ENCODE measurements at regions of chr21 and their contacts with region 1.

Region 1: DNA sequence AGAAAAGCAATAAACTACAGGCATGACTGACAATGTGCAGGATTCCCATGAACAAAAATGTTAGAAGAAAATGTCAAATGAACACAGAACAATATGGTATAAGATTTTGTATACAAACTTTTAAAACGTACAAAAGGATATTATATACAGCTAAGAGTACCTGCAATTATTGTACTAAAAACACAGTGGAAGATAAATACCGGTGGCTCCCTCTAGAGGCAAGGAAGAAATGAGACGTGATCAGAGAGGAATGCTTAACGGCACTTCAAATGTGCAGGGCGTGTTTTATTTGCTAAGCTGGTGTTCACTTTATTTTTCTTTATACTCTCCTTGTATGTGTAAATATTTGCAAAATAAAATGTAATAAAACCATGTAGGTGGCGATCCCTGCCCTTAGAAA is 191.8 kb upstream of the SAMSN1 start:
- DNase-seq: peak; percentile 53
- ATAC-seq: peak; percentile 68
- H3K4me3 Mint-ChIP-seq: no peak overlapping the region
- H3K27ac Mint-ChIP-seq: no peak overlapping the region
- H3K4me1 Mint-ChIP-seq: peaks cover 31% of the 10 kb centered on the region
- H3K27me3 Mint-ChIP-seq: no peaks in the 10 kb centered on the region

Region 2: DNA sequence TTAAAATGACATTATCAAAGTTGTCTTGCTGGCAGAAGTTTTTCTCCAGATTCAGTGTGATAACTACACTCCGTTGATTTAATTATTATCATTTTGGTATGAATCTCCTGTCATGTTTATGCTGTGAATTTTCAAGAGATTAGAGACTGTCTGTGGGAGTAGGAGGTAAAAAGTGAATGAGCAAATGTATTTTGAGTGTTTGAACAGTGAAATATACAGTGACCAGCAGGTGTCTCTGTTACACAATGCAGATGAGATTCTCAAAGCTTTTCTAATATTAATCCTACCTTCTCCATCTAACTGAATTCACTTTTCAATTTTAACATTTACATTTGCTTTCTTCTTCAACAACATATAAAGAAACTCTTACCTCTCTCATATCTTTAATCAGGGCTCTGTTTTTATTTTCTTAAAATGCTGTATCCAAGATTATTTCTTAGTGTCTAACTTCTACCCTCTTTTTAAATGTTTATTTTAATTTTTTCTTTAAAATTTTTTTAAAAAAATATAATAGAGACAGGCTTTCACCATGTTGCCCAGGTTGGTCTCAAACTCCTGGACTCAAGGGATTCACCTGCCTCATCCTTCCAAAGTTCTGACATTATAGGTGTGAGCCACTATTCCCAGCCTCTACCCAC is 334.1 kb before region 1 on chr21:
- CTCF ChIA-PET with region 1: interaction called, 6 read pairs
- POLR2A ChIA-PET with region 1: no interaction called
- intact Hi-C with region 1: loop called (anchors 1 kb)
- DNase-seq: no peak
- ATAC-seq: no peak
- H3K4me3 Mint-ChIP-seq: no peak overlapping the region
- H3K27ac Mint-ChIP-seq: no peak overlapping the region
- H3K4me1 Mint-ChIP-seq: no peaks in the 10 kb centered on the region
- H3K27me3 Mint-ChIP-seq: no peaks in the 10 kb centered on the region

Region 3: DNA sequence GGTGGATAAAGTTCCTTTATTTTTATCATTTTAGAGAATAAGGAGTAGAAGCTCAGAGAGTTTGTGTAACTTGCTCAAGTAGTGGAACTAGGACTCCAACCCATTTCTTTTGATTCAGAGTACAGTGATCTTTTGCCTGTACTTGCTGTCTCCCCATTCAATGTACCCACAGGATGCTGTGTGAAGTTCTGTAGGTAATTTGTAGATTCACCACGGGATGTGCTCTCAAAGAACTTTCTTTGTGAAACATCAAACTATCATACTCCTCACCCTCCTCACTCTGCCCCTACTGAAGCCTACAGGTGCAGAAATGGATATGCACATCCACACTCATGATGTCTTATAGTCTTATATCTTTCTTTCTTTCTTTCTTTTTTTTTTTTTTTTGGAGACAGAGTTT is 289.1 kb before region 1 on chr21:
- CTCF ChIA-PET with region 1: interaction called, 4 read pairs
- POLR2A ChIA-PET with region 1: no interaction called
- intact Hi-C with region 1: loop called (anchors 2 to 10 kb)
- DNase-seq: no peak
- ATAC-seq: no peak
- H3K4me3 Mint-ChIP-seq: no peak overlapping the region
- H3K27ac Mint-ChIP-seq: no peak overlapping the region
- H3K4me1 Mint-ChIP-seq: peaks cover 23% of the 10 kb centered on the region
- H3K27me3 Mint-ChIP-seq: no peaks in the 10 kb centered on the region

Region 4: DNA sequence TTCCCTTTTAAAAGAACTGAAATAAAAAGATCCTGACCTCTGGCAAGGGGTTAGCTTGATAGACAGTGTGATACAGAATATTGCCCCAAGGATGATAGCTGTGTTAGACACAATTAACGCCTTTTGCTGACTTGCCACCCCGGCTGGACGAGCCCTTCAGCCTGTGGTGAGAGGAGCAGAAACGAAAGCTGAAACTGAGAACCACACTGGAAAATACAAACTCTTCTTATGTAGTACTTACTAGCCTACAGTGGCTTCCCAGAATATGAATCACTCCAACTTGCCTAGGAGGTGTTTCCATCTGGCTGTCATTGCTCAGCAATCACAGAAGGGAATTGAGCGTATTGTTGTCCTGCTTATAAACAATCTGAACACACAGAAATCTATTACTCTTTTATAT is 214.7 kb before region 1 on chr21:
- CTCF ChIA-PET with region 1: no interaction called
- POLR2A ChIA-PET with region 1: no interaction called
- intact Hi-C with region 1: loop called in 1 of 2 experiments (anchors 5 kb)
- DNase-seq: peak; percentile 64
- ATAC-seq: peak; percentile 79
- H3K4me3 Mint-ChIP-seq: peak overlapping the region; percentile 59
- H3K27ac Mint-ChIP-seq: peak overlapping the region; percentile 91
- H3K4me1 Mint-ChIP-seq: peaks cover 62% of the 10 kb centered on the region
- H3K27me3 Mint-ChIP-seq: no peaks in the 10 kb centered on the region

Region 5: GRCh38 chr21:14630556-14631069 is 107.3 kb before region 1 on chr21:
- CTCF ChIA-PET with region 1: no interaction called
- POLR2A ChIA-PET with region 1: no interaction called
- intact Hi-C with region 1: loop called in 1 of 2 experiments (anchors 5 kb)
- DNase-seq: no peak
- ATAC-seq: peak; percentile 90
- H3K4me3 Mint-ChIP-seq: peak overlapping the region; percentile 19
- H3K27ac Mint-ChIP-seq: peak overlapping the region; percentile 77
- H3K4me1 Mint-ChIP-seq: peaks cover 16% of the 10 kb centered on the region
- H3K27me3 Mint-ChIP-seq: no peaks in the 10 kb centered on the region

Region 6: DNA sequence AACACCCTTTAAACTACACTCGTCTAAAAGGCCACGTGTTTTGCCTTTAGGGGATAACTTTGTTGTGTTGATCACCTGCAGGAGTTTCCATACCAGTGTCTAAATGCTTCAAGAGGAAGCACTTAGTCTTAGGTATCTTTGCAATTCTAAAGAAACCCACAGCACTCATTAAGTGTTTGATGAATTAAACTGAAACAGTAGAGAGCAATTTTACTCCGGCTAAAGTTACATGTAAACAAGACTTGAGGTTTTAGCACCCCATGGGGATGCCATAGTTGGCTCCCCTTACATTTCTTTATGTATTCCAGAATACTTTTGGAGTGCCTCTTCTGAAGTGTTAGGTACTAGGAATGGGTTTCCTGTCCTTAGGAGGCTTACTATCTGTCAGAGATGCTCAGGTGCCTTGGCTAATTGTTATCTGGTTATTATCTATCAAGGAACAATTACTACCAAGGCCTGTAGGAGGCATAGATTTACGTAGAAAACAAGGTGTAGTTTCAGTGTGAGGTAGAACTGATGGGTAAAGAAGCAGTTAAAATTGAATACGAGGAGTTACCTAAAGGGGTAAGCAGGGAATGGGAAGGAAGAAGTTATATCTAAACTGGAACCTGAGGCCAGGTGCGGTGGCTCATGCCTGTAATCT is 15.0 kb before region 1 on chr21:
- CTCF ChIA-PET with region 1: interaction called, 10 read pairs
- POLR2A ChIA-PET with region 1: no interaction called
- intact Hi-C with region 1: no loop called
- DNase-seq: no peak
- ATAC-seq: no peak
- H3K4me3 Mint-ChIP-seq: no peak overlapping the region
- H3K27ac Mint-ChIP-seq: no peak overlapping the region
- H3K4me1 Mint-ChIP-seq: peaks cover 4% of the 10 kb centered on the region
- H3K27me3 Mint-ChIP-seq: no peaks in the 10 kb centered on the region

Region 7: DNA sequence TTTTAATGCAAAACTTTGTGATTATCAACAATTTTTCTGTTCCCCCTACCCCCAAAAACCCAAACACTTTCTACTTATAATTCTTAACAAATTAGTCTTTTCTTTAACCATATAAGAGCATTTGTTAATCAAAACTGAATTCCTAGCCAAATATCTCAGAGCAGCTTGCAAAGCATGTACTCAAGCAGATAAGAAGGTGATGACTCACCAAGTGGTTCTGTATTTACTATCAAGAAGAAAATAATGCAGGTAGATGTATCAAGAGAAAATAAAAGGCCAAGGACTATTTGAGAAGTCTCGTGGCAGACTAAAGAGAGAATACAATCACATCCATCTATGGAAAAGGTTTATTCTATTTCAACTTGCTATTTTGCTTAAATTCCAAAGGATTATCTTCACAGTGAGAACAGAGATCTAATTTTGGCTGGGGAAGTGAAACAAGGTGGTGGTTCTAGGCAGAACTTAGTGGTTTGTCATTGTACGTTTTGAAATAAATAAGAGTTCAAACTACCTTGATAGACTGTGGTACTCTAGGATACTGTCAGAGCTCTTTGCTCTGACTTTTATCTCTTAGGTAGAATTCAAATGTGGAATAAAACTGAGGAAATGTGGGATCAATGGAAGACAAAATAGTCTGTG is 421.6 kb after region 1 on chr21:
- CTCF ChIA-PET with region 1: no interaction called
- POLR2A ChIA-PET with region 1: no interaction called
- intact Hi-C with region 1: no loop called
- DNase-seq: no peak
- ATAC-seq: no peak
- H3K4me3 Mint-ChIP-seq: no peak overlapping the region
- H3K27ac Mint-ChIP-seq: no peak overlapping the region
- H3K4me1 Mint-ChIP-seq: peaks cover 5% of the 10 kb centered on the region
- H3K27me3 Mint-ChIP-seq: peaks cover 2% of the 10 kb centered on the region